ENCODE measurements at regions of chr7 and their contacts with region 1.

Region 1: GRCh38 chr7:47571331-47572093 is 10.4 kb downstream of the TNS3 start:
- DNase-seq: peak; percentile 74 to 93 (median 84)
- ATAC-seq: peak; percentile 56 to 73 (median 64)
- H3K4me3 ChIP-seq: peak overlapping the region in 2 of 4 donors; percentile 24 to 29
- H3K27ac ChIP-seq: peak overlapping the region; percentile 80 to 89 (median 82)
- H3K4me1 ChIP-seq: peaks cover 79 to 88% (median 87%) of the 10 kb centered on the region in 3 donors
- H3K27me3 ChIP-seq: no peaks in the 10 kb centered on the region
- CTCF ChIP-seq: no peak

Region 2: DNA sequence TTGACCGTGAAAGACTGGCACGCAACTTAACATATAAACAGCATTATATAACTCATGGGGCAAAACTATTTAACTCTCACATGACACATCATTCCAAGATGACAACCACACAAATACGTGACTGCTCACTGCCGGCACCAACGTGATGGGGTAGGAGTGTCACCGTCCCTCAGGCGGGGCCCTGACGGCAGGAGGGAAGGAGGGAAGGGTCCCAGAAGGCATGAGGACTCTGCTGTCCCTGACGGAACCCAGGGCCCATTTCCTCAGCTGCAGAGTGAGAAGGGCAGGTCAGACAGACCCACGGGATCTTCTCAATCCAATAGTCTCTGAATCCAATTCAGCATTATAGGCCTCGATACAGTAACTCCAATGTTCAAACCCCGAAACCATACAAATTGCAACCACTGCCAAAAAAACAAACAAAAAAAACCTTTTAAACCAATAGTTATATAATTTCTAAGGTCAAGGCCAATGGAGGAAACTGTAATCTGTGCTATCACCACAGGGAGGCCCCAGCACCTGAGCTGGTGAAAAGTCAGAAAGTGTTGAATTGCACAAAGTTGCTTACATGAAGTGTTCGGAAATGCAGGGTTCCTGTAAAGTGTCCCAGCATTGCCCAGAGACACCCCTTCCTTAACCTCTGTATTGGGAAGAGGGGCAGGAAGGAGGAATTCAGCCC is 127.0 kb before region 1 on chr7:
- intact Hi-C with region 1: loop called in 1 of 3 experiments (anchors 10 kb)
- DNase-seq: peak in 2 of 6 donors; percentile 54 to 56
- ATAC-seq: peak; percentile 35 to 65 (median 42)
- H3K4me3 ChIP-seq: no peak overlapping the region
- H3K27ac ChIP-seq: peak overlapping the region in 2 of 4 donors; percentile 30 to 37
- H3K4me1 ChIP-seq: peaks cover 40 to 63% (median 59%) of the 10 kb centered on the region in 3 donors
- H3K27me3 ChIP-seq: no peaks in the 10 kb centered on the region
- CTCF ChIP-seq: peak; percentile 20 to 55 (median 28)

Region 3: DNA sequence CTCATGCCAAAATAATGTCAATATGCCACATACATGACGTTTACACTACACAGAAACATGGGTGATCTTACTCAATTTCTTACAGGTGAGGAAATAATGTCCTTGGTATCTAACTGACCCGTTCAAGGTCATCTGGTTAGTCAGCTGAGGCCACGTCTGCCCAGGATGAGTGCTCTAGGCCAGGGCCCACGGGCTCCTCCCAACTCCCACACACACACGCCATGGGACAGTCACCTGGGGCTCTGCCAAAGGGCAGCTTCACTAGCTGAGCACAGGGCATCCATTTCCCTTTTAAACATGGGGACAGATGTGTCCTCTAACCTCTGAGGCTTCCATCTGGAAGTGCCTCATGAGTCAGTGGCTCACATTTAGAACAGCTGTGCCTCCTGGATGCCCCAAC is 113.5 kb before region 1 on chr7:
- intact Hi-C with region 1: no loop called
- DNase-seq: peak in 3 of 6 donors; percentile 61 to 78 (median 70)
- ATAC-seq: peak; percentile 15 to 27 (median 20)
- H3K4me3 ChIP-seq: no peak overlapping the region
- H3K27ac ChIP-seq: peak overlapping the region in 3 of 4 donors; percentile 13 to 47 (median 26)
- H3K4me1 ChIP-seq: peaks cover 28 to 54% (median 38%) of the 10 kb centered on the region in 3 donors
- H3K27me3 ChIP-seq: no peaks in the 10 kb centered on the region
- CTCF ChIP-seq: no peak

Region 4: GRCh38 chr7:47474937-47475878 is 96.3 kb before region 1 on chr7:
- intact Hi-C with region 1: loop called in 1 of 3 experiments (anchors 5 kb)
- DNase-seq: peak; percentile 88 to 98 (median 96)
- ATAC-seq: peak; percentile 77 to 85 (median 82)
- H3K4me3 ChIP-seq: no peak overlapping the region
- H3K27ac ChIP-seq: peak overlapping the region; percentile 77 to 89 (median 86)
- H3K4me1 ChIP-seq: peaks cover 73 to 83% (median 75%) of the 10 kb centered on the region in 3 donors
- H3K27me3 ChIP-seq: no peaks in the 10 kb centered on the region
- CTCF ChIP-seq: no peak

Region 5: DNA sequence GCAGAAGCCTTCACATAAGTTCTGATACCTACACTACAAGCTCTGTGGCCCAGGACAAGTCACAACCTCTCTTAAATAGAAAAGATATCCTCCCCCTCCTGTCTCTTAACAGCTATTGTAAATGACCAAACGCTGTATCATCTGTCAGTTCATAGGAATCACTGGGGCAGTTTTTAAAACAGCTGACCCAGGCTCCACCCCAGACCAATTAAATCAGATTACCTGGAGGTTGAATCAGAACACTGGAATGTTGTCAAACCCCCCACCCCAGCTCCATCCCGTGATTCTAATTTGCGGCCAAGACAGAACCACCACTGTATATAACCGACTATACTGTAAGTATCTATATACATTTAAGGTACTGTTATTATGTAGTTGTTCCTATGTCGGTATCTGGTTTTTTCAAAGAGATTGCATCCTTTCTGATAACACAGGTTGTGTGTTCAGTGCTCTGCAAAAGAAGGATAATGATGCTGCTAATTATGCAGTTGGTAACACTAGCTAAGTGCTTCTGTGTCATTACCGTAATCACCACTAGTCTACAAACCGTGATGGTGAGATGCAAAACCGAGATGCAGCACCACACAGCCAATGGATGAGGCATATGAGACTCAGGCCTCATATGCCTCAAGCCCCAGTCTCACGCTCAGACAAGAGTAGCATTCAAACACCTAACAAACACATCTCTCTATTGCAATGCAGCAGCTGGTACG is 37.0 kb before region 1 on chr7:
- intact Hi-C with region 1: loop called in 1 of 3 experiments (anchors 5 kb)
- DNase-seq: no peak
- ATAC-seq: peak in 1 of 4 donors; percentile 4
- H3K4me3 ChIP-seq: no peak overlapping the region
- H3K27ac ChIP-seq: no peak overlapping the region
- H3K4me1 ChIP-seq: peaks cover 0 to 18% (median 12%) of the 10 kb centered on the region in 3 donors
- H3K27me3 ChIP-seq: no peaks in the 10 kb centered on the region
- CTCF ChIP-seq: no peak

Region 6: DNA sequence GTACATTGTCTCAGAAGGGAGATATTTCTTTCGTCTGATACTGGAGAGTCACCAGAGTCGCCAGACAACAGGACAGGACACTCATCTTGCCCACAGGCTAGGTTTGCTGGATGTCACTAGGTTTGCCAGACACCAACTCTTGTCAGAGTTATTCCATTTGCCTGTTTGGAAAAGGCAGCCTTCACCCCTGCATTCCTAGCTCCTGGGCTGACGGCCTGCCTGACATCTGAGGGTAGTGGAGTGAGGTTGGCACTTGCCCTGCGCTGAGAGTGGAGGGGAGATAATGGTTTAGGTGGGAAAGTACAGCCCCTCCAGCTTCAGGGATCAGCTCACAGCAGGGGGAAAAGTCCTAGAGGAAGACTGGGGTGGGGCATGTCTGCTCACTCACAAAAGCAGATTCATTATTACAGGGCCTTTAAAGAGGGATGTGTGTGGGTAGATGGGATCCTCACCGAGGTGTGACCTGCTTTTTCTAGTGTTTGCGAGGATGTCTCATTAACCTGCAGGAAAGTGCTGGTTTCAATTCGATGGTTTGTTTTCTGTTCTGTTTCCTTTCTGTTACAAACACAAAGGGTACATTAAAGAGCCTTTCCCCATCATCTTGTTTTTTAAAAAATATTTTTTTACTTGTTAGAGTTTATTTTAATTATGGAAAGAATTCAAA is 89.7 kb after region 1 on chr7:
- intact Hi-C with region 1: no loop called
- DNase-seq: no peak
- ATAC-seq: no peak
- H3K4me3 ChIP-seq: no peak overlapping the region
- H3K27ac ChIP-seq: no peak overlapping the region
- H3K4me1 ChIP-seq: no peaks in the 10 kb centered on the region
- H3K27me3 ChIP-seq: no peaks in the 10 kb centered on the region
- CTCF ChIP-seq: no peak

Measured in pancreas (tissue), 10 donors.